ENCODE measurements at regions of chr7 and their contacts with region 1.

Region 1: DNA sequence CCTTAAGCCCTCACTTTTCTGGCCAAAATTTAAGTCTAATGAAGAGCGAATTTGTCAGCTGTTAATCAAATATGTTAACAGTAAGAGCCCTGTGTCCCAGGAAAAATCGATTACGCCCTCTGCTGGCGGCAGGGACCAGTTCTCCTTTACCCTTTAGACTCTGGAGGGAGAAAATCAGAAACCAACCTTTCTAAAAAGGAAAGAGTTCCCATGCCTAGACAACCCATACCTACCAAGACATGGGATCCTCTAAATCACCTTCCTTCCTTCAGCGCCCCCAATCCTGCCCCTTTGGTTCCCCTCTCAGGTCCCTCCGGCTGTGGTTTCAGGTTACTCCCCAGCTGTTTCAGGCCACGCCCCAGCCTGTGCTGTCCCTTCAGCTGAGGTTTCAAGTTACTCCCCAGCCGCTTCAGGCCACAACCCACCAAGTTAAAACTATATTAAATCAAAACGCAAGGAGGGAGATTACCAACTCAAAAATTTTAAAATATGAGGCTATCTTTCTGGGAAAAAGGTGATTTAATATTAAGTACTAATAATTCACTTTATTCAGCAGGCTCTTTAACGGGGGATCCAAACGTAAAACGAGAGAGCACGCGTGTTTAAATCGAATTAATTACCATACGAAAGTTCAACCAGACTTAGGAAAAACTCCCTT is 1.4 kb upstream of the AKR1B15 start:
- H3K4me3 Mint-ChIP-seq: no peak overlapping the region
- H3K27ac Mint-ChIP-seq: no peak overlapping the region
- H3K4me1 Mint-ChIP-seq: peaks cover 4% of the 10 kb centered on the region
- H3K27me3 Mint-ChIP-seq: peaks cover 19% of the 10 kb centered on the region

Region 2: GRCh38 chr7:134605973-134606923 is 58.7 kb after region 1 on chr7:
- intact Hi-C with region 1: loop called (anchors 5 kb)
- H3K4me3 Mint-ChIP-seq: peak overlapping the region; percentile 21
- H3K27ac Mint-ChIP-seq: peak overlapping the region; percentile 45
- H3K4me1 Mint-ChIP-seq: peaks cover 10% of the 10 kb centered on the region
- H3K27me3 Mint-ChIP-seq: peaks cover 5% of the 10 kb centered on the region

Region 3: DNA sequence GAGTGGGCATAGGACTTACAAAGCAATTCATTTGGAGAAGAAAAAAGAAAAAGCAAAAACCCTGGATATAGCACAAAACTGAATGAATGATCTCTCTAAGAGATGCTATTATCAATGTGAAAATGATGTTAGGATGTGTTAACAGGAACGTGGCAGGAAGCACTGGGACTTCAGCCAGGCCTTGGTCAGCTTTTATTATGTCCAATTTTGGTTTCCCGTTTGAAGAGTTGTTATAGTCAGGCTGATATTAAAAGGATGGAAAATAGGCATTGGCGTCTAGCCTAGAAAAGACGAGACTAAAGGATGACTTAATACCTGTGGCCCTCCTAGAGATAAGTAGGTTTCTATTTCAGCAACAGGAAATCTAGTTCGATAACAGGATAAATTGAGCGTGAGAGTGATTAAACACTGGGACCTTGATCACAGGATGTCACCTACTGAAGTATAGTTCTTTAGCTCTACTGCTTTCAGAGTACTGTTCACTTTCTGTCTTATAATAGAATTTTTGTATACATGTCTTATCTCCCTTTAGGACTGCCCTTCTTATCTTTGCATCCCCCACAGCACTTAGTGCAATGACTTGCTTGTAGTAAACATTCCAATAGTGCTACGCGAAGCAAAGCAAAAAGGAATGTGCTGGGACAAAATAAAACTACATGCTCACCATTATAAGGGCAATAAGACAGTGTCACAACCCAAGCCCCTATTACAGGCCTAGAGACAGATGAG is 339.0 kb after region 1 on chr7:
- intact Hi-C with region 1: no loop called
- H3K4me3 Mint-ChIP-seq: no peak overlapping the region
- H3K27ac Mint-ChIP-seq: no peak overlapping the region
- H3K4me1 Mint-ChIP-seq: peaks cover 20% of the 10 kb centered on the region
- H3K27me3 Mint-ChIP-seq: peaks cover 7% of the 10 kb centered on the region